ENCODE measurements at regions of chr2 and their contacts with region 1.

Region 1: GRCh38 chr2:139963863-139964355 is 1183.7 kb upstream of the NXPH2 start:
- DNase-seq: peak; percentile 62
- H3K4me3 ChIP-seq: no peak overlapping the region
- H3K27ac ChIP-seq: peak overlapping the region; percentile 57
- H3K4me1 ChIP-seq: no peaks in the 10 kb centered on the region
- H3K27me3 ChIP-seq: no peaks in the 10 kb centered on the region
- CTCF ChIP-seq: no peak
- POLR2A ChIP-seq: no peak

Region 2: GRCh38 chr2:139631966-139632365 is 331.9 kb before region 1 on chr2:
- CTCF ChIA-PET with region 1: no interaction called
- POLR2A ChIA-PET with region 1: no interaction called
- dilution Hi-C with region 1: no loop called
- intact Hi-C with region 1: no loop called
- DNase-seq: no peak
- H3K4me3 ChIP-seq: no peak overlapping the region
- H3K27ac ChIP-seq: no peak overlapping the region
- H3K4me1 ChIP-seq: no peaks in the 10 kb centered on the region
- H3K27me3 ChIP-seq: no peaks in the 10 kb centered on the region
- CTCF ChIP-seq: no peak
- POLR2A ChIP-seq: no peak

Region 3: DNA sequence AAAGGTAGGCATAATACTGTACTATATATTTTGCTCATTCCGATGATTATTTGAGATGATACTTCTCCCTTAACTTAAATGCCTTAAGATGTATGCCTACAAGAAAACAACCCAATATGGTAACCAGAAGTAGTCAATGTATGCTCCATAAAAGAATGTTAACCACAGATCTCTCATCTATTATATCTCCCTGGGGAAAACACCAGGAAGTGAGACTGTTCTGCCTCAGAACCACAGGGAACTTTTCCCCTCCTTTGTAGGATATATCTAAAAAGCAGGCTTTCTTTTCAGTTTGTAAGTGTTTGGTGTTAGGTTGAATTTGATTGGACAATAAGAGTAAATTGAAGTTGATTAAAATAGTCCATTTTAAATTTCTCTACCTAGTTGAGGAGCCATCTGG is 23.2 kb before region 1 on chr2:
- CTCF ChIA-PET with region 1: interaction called, 3 read pairs
- POLR2A ChIA-PET with region 1: no interaction called
- dilution Hi-C with region 1: no loop called
- intact Hi-C with region 1: loop called (anchors 1 kb)
- DNase-seq: peak; percentile 8
- H3K4me3 ChIP-seq: no peak overlapping the region
- H3K27ac ChIP-seq: peak overlapping the region; percentile 73
- H3K4me1 ChIP-seq: peaks cover 28% of the 10 kb centered on the region
- H3K27me3 ChIP-seq: no peaks in the 10 kb centered on the region
- CTCF ChIP-seq: no peak
- POLR2A ChIP-seq: no peak

Region 4: GRCh38 chr2:139992078-139992477 is 28.2 kb after region 1 on chr2:
- CTCF ChIA-PET with region 1: no interaction called
- POLR2A ChIA-PET with region 1: no interaction called
- dilution Hi-C with region 1: no loop called
- intact Hi-C with region 1: no loop called
- DNase-seq: no peak
- H3K4me3 ChIP-seq: no peak overlapping the region
- H3K27ac ChIP-seq: no peak overlapping the region
- H3K4me1 ChIP-seq: no peaks in the 10 kb centered on the region
- H3K27me3 ChIP-seq: no peaks in the 10 kb centered on the region
- CTCF ChIP-seq: no peak
- POLR2A ChIP-seq: no peak

Region 5: DNA sequence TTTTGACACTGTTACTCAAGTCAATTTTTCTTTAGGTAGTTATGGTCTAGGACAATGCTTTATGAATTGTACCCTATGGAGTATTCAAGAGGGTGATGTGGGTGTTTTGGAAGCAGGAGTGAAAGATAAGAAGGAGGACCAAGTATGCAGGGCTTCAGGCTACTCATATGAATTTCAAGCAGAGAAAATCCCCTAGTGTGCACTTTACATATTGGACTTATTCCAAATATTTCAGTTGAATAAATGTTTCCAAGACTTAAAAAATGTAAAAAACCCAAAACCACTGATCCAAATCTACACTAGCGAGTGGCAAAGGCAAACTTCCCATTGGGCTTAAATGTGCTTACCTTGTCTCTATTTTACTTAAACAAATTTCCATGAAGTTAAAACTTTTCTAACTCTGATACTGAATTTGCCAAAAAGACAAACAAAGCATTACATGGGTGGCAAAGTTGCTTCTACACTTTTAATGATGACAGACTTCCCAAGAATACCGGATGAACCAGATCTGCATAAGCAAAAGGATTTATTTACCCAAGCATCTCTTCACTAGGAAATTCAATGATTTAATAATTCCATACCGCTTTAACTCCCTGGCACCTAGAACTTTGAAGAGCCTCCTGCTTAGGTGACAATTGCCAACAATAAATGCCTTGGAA is 49.8 kb after region 1 on chr2:
- CTCF ChIA-PET with region 1: no interaction called
- POLR2A ChIA-PET with region 1: no interaction called
- dilution Hi-C with region 1: no loop called
- intact Hi-C with region 1: no loop called
- DNase-seq: no peak
- H3K4me3 ChIP-seq: no peak overlapping the region
- H3K27ac ChIP-seq: no peak overlapping the region
- H3K4me1 ChIP-seq: no peaks in the 10 kb centered on the region
- H3K27me3 ChIP-seq: no peaks in the 10 kb centered on the region
- CTCF ChIP-seq: no peak
- POLR2A ChIP-seq: no peak

Region 6: GRCh38 chr2:141015341-141016047 is 1051.6 kb after region 1 on chr2:
- CTCF ChIA-PET with region 1: no interaction called
- POLR2A ChIA-PET with region 1: no interaction called
- dilution Hi-C with region 1: no loop called
- intact Hi-C with region 1: loop called (anchors 5 kb)
- DNase-seq: no peak
- H3K4me3 ChIP-seq: no peak overlapping the region
- H3K27ac ChIP-seq: no peak overlapping the region
- H3K4me1 ChIP-seq: peaks cover 8% of the 10 kb centered on the region
- H3K27me3 ChIP-seq: no peaks in the 10 kb centered on the region
- CTCF ChIP-seq: no peak
- POLR2A ChIP-seq: no peak